ENCODE measurements at regions of chr2 and their contacts with region 1.

Region 1: DNA sequence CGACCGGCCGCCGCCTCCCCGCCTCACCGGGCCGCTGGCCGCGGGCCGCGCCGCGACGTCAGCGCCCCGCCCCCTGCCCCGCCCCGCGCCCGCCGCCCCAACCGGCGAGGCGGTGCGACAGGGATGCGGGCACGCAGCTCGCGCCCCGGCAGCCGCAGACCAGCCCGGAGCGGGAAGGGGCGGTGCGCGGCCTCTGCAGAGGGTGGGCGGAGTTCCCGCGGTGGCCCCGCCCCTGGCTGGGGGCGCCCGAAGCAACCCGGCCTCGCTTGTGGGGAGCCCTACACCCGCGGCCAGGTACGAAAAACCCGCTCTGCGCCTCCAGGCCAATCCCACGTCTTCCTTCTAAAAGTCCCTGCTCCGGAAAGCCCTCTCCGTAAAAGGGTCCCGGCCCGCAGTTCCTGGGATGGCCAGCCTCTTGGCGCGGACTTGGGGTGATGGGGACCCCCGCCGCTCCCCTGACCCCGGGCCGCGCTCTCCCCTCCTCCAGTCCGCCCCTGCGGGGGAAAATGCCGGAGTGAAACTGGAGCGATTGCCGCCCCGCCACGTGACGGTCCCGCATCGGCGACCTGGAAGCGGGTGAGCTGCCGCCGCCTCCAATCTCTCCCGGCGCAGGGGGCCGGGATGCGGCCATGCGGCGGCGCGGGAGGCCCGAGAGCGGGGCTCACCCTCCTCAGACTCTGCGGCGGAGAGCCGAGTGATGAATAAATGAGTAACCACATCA is at the start of gene RAB11FIP5:
- DNase-seq: peak; percentile 78
- H3K4me3 Mint-ChIP-seq: peak within 1 kb of the TSS; percentile 81
- H3K27ac Mint-ChIP-seq: no peak within 1 kb of the TSS
- H3K4me1 Mint-ChIP-seq: peaks cover 21% of the 10 kb centered on the region
- H3K27me3 Mint-ChIP-seq: no peaks in the 10 kb centered on the region
- total RNA-seq, gene RAB11FIP5: 7.3 to 7.4 TPM

Region 2: DNA sequence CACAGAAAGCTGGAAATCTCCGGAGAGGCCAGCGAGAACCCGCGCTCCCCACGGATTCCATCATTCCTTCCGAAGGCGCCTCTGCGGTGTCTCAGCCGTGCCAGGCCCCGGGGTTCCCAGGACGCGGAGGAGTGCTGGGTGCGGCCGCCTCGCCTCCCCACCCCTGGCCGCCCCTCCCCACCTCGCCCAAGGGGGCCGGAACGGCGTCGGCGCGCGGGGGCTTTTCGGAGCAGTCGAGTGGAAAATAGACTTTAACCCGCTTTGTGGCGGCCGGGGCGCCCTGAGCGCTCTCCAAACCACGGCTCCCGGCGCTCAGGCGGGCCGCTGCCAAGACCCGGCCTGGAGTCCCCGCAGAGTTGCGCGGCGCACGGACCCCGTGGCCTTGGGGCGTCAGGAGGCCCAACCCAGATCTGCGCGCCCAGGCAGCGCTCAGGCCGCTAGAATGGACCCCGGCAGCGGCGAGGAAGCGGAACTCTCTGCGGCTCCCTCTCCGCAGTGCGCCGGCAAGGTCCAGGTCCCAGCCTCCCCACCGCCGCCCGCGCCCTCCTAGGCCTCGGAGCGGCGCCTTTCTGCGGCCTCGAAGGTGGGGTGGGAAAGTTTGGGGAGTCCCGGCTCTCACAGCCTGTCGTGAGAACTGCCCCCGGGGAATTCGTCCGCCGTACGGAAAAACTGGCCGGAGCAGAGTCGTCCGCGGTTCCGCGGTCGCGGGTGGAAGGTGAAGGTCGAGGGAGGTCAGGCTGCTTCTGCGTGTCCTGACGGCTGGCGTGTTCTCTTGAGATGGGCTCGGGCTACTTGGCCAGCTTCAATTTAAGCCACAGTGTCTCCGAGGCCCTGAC is 196.9 kb before region 1 on chr2:
- CTCF ChIA-PET with region 1: no interaction called
- intact Hi-C with region 1: loop called (anchors 1 kb)
- DNase-seq: peak; percentile 53
- H3K4me3 Mint-ChIP-seq: peak overlapping the region; percentile 71
- H3K27ac Mint-ChIP-seq: no peak overlapping the region
- H3K4me1 Mint-ChIP-seq: peaks cover 30% of the 10 kb centered on the region
- H3K27me3 Mint-ChIP-seq: peaks cover 70% of the 10 kb centered on the region

Region 3: GRCh38 chr2:72931280-72931910 is 181.7 kb before region 1 on chr2:
- CTCF ChIA-PET with region 1: no interaction called
- intact Hi-C with region 1: no loop called
- DNase-seq: no peak
- H3K4me3 Mint-ChIP-seq: no peak overlapping the region
- H3K27ac Mint-ChIP-seq: no peak overlapping the region
- H3K4me1 Mint-ChIP-seq: no peaks in the 10 kb centered on the region
- H3K27me3 Mint-ChIP-seq: peaks cover 6% of the 10 kb centered on the region

Region 4: GRCh38 chr2:73561422-73561821 is 448.3 kb after region 1 on chr2:
- CTCF ChIA-PET with region 1: no interaction called
- intact Hi-C with region 1: no loop called
- DNase-seq: no peak
- H3K4me3 Mint-ChIP-seq: no peak overlapping the region
- H3K27ac Mint-ChIP-seq: no peak overlapping the region
- H3K4me1 Mint-ChIP-seq: no peaks in the 10 kb centered on the region
- H3K27me3 Mint-ChIP-seq: no peaks in the 10 kb centered on the region

Measured in activated naive CD4-positive, alpha-beta T cell treated with anti-CD3 and anti-CD28 coated beads for 36 hours (primary cell).